ENCODE measurements at regions of chr12 and their contacts with region 1.

Region 1: GRCh38 chr12:70590051-70590450 is 47.2 kb downstream of the PTPRB start:
- DNase-seq: peak; percentile 72
- H3K4me3 ChIP-seq: no peak overlapping the region
- H3K27ac ChIP-seq: no peak overlapping the region
- H3K4me1 ChIP-seq: no peaks in the 10 kb centered on the region
- H3K27me3 ChIP-seq: no peaks in the 10 kb centered on the region
- CTCF ChIP-seq: peak; percentile 55 to 89 (median 84)
- POLR2A ChIP-seq: no peak

Region 2: DNA sequence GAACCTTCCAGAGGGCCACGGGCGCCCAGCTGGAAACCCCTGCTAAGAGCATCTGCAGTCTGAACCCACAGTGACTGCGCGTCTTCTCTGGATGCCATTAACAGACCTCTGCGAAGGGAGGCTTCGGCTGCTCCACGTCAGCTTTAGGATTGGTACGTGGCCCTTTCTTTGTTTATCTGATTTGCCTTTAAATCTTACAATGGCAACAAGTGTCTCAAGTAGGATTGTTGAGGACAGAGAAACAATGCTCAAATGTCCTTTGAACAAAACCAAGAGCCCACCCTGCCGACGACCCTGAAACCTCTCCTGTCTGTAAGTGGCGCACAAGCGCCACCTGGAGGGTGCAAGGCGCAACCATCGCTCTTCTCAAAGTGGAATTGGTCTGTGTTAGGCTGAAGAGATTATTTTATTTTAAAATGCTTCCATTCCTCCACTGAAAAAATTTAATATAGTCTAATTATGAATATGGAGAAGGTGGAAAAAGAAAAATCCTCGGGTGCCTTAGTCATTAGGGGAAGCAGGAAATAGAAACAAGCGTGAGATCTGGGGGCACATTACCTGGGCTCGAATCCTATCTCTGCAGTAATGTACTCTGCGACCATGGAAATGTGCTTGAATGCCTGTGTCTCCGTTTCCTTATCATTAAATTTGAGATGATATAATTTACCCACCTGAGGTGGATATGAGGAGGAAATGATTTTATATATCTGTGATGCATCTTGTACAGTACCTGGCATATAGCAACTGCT is 129.8 kb after region 1 on chr12:
- intact Hi-C with region 1: loop called (anchors 5 kb)
- DNase-seq: peak; percentile 18
- H3K4me3 ChIP-seq: no peak overlapping the region
- H3K27ac ChIP-seq: no peak overlapping the region
- H3K4me1 ChIP-seq: no peaks in the 10 kb centered on the region
- H3K27me3 ChIP-seq: no peaks in the 10 kb centered on the region
- CTCF ChIP-seq: peak; percentile 50 to 85 (median 81)
- POLR2A ChIP-seq: no peak

Region 3: GRCh38 chr12:71014180-71014785 is 424.2 kb after region 1 on chr12:
- intact Hi-C with region 1: loop called (anchors 10 kb)
- DNase-seq: no peak
- H3K4me3 ChIP-seq: no peak overlapping the region
- H3K27ac ChIP-seq: no peak overlapping the region
- H3K4me1 ChIP-seq: no peaks in the 10 kb centered on the region
- H3K27me3 ChIP-seq: no peaks in the 10 kb centered on the region
- CTCF ChIP-seq: peak in 3 of 4 experiments; percentile 21 to 66 (median 53)
- POLR2A ChIP-seq: no peak

Measured in prostate gland (tissue), 2 donors.